Lower lobe of right lung (tissue), 2 donors: ENCODE measurements at regions of chr19 and their contacts with region 1.

Region 1: DNA sequence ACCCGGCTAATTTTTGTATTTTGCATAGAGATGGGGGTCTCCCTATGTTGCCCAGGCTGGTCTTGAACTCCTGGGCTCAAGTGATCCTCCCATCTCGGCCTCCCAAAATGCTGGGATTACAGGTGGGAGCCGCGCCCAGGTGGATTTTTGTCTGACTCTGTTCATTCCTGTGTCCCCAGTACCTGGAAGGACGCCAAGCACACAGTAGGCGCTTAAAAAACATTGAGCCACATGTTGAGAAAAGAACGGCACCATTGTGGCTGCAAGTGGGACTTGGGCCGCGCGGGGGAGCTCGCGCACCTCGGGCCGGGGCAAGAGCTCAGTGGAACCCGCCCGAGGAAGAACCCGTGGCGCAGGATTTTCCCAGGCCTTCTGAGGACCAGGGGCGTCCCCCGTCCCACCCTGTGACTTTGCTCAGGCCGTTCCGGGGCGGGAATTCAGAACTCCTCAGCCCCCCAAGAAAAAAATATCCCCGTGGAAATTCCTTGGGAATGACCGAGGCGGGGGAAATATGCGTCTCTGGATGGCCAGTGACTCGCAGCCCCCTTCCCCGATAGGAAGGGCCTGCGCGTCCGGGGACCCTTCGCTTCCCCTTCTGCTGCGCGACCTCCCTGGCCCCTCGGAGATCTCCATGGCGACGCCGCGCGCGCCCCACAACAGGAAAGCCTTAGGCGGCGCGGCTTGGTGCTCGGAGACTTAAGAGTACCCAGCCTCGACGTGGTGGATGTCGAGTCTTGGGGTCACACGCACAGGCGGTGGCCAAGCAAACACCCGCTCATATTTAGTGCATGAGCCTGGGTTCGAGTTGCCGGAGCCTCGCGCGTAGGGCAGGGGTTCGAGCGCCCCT is 1.4 kb upstream of the ICAM1 start:
- DNase-seq: peak; percentile 93
- ATAC-seq: peak; percentile 75 to 87
- H3K4me3 ChIP-seq: peak overlapping the region; percentile 86
- H3K27ac ChIP-seq: peak overlapping the region; percentile 96
- H3K4me1 ChIP-seq: peaks cover 70% of the 10 kb centered on the region
- H3K27me3 ChIP-seq: no peaks in the 10 kb centered on the region
- CTCF ChIP-seq: peak; percentile 92

Region 2: DNA sequence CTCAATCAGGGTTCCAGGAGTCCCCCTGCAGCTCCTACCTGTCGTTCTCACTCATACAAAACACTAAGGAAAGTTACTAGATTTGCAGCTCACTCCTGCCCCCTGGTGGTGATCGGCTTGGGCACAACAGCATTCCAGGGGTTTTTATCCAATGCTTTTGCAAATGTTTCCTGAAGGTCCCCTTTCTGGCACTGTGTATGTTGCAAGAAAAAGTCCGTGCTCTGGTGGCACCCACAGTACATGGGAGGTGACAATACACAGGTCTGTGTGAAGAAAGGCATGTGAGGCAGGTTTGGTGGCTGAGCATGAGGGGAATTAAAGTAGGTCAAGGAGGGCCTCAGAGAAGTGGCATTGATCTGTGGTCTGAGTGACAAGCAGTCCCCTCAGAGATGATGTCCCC is 119.4 kb after region 1 on chr19:
- intact Hi-C with region 1: loop called (anchors 5 kb)
- DNase-seq: peak; percentile 87
- ATAC-seq: peak; percentile 77 to 79
- H3K4me3 ChIP-seq: no peak overlapping the region
- H3K27ac ChIP-seq: no peak overlapping the region
- H3K4me1 ChIP-seq: peaks cover 9% of the 10 kb centered on the region
- H3K27me3 ChIP-seq: no peaks in the 10 kb centered on the region
- CTCF ChIP-seq: peak; percentile 94